Aorta (tissue), 5 donors: ENCODE measurements at regions of chr13 and their contacts with region 1.

Region 1: DNA sequence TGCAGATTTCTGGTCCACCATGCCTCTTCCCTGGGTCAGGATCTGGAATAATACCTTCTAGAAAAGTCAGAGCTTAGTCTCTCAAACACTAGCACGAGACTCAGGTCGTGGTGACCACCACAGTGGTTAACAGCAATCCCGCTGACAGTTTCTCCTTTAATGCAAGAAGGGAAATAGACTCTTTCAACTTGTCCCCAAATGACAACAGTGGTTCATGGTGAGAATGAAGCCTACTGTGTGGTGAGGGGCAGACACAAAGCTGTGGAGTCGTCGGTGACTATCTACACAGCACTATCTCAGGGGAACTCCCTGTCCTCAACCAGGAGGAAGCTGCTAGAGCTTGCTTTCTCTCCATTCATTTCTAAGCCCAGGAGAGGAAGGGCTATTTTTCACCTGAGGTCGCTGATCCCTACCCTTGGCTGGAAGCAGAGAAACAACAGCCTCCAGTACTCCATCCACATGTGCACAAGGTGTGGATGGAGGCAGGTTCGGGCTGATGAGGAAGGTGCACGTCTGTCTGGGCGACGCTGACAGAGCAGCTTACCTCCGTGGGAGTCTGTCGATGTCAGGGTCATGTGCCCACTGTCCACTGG is 72.4 kb downstream of the STK24 start:
- DNase-seq: no peak
- ATAC-seq: no peak
- H3K4me3 ChIP-seq: no peak overlapping the region
- H3K27ac ChIP-seq: no peak overlapping the region
- H3K4me1 ChIP-seq: peaks cover 8 to 10% of the 10 kb centered on the region in 2 donors
- H3K27me3 ChIP-seq: no peaks in the 10 kb centered on the region

Region 2: DNA sequence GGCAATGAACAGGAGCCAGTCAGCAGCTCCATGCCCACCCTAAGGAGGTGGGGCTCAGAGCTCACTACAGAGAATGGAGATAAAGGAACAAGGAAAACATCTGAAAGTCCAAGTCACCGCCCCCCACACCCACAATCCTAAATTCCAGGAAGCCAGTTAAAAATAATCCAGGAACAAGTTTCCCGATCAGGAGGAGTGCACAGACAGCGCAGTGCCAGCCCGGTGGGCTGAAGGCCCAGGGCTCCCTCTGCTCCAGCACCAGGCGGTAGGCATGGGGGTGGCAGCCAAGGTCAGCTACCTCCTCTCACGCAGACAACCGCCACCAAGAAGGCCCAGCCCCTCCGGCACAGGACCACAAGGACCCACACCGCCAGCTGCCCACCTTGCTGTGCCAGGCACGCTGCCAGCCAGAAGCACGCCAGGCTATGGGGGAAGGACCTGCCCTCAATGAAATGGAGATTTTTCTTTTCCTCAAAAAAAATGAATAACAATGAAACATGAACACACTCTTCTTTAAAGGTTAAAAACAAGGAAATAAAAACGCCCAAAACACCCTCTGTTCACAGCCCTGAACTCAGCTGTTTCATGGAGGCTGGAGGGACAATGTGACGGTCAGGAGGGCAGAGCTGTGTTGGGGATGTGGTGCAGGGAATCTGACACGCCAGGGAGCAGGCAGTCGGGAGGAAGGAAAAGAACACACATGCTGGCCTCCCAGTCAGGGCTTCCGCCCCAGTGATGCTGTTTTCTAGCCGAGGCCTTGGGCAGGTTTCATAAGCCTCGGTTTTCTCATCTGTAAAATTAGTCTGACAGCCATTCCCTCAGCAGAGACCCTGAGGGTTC is 61.5 kb after region 1 on chr13:
- intact Hi-C with region 1: loop called in 1 of 2 experiments (anchors 5 kb)
- DNase-seq: peak; percentile 69 to 79
- ATAC-seq: peak; percentile 83
- H3K4me3 ChIP-seq: peak overlapping the region in 1 of 2 donors; percentile 9
- H3K27ac ChIP-seq: peak overlapping the region; percentile 41 to 62
- H3K4me1 ChIP-seq: no peaks in the 10 kb centered on the region
- H3K27me3 ChIP-seq: no peaks in the 10 kb centered on the region

Region 3: DNA sequence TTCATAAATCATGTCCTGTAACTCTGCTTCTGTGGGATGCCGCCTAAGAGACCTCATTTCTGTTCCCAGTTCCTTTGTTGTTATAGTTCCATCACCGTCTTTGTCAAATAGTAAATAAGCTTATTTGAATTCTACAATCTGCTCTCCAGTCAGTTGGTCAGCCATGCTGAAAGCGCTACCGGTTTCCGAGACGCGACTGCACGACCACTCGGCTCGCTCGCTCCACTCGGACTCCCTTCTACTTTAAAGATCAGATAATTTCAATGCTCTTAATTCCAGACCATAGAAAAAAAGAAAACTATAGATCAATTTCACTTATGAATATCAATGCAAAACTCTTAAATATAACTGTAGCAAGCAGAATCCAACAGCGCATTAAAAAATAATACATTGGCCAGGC is 136.6 kb after region 1 on chr13:
- intact Hi-C with region 1: no loop called
- DNase-seq: no peak
- ATAC-seq: no peak
- H3K4me3 ChIP-seq: no peak overlapping the region
- H3K27ac ChIP-seq: no peak overlapping the region
- H3K4me1 ChIP-seq: no peaks in the 10 kb centered on the region
- H3K27me3 ChIP-seq: no peaks in the 10 kb centered on the region